ENCODE measurements at regions of chr5 and their contacts with region 1.

Region 1: DNA sequence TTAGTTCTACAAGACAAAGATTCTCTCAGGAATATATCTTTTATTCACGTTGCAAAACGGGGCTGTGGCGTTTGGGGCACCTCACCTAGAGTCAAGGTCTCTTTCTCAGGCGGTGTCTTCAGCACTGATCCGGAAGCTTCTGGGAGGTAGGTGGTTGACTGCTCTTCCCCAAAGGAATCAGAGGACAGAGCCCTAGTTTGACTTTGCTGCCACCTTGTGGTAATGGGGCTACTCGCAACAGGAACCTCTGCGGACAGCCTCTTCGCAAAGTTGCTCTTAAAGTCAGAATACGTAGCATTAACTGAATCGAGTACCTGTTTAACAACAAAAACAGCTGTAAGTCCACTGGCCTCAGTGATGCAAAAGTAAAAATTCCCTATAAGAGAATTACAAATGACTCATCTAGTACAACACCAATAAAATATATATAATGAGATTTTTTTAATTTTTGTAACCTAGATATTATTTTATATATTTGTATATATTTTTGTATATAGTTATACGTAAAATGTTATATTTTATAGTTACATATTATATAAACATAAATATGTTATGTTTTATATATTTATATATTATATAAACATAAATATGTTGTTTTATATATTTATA is 13.3 kb upstream of the GPX8 start:
- DNase-seq: peak; percentile 47 to 84 (median 77)
- ATAC-seq: peak; percentile 91
- H3K4me3 ChIP-seq: no peak overlapping the region
- H3K4me3 Mint-ChIP-seq: peak overlapping the region in 7 of 10 donors; percentile 21 to 74 (median 42)
- H3K27ac ChIP-seq: no peak overlapping the region
- H3K27ac Mint-ChIP-seq: peak overlapping the region in 6 of 9 donors; percentile 1 to 60 (median 27)
- H3K4me1 ChIP-seq: peaks cover 5 to 14% of the 10 kb centered on the region in 2 donors
- H3K4me1 Mint-ChIP-seq: peaks cover 12 to 38% (median 20%) of the 10 kb centered on the region in 7 donors
- H3K27me3 ChIP-seq: no peaks in the 10 kb centered on the region
- H3K27me3 Mint-ChIP-seq: peaks cover 0 to 62% (median 0%) of the 10 kb centered on the region in 5 donors

Region 2: DNA sequence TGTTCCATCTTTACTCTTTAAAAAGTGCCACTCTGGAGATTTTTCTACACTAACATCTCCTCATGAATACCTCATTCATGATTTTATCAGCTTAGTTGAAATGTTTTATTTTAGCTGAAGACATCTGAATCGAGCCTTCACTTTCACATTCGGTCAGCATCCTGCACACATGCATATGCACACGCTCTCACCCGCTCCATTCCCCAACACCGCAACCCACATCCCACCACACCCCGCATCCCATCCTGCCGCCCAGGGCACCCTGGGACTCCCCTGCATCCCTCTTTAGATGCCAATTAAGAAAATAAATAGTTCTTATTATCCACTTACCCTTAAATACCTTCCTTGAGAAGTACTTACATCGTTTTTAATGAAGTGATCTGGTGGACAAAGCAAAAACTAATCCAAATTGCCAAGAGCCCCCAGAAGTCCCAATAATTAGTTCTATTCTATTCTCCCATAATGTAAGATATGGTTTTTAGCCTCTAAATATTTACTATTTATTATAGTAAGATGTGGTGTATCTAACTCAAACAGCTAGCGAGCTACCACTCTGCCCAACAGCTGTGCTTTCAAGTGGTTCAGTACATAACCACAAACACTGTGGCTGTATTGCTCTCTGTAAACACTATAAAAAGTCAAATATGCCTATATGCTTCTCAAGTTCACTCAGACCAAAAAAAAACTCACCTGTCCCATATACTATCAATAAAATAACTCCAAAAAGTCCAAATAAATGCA is 84.4 kb before region 1 on chr5:
- CTCF ChIA-PET with region 1: no interaction called
- POLR2A ChIA-PET with region 1: no interaction called
- intact Hi-C with region 1: loop called in 1 of 2 experiments (anchors 1 kb)
- DNase-seq: peak in 7 of 9 donors; percentile 25 to 71 (median 46)
- ATAC-seq: peak; percentile 81
- H3K4me3 ChIP-seq: peak overlapping the region; percentile 33
- H3K4me3 Mint-ChIP-seq: peak overlapping the region; percentile 43 to 94 (median 82)
- H3K27ac ChIP-seq: no peak overlapping the region
- H3K27ac Mint-ChIP-seq: peak overlapping the region; percentile 17 to 98 (median 62)
- H3K4me1 ChIP-seq: peaks cover 26 to 30% of the 10 kb centered on the region in 2 donors
- H3K4me1 Mint-ChIP-seq: peaks cover 28 to 80% (median 67%) of the 10 kb centered on the region in 7 donors
- H3K27me3 ChIP-seq: no peaks in the 10 kb centered on the region
- H3K27me3 Mint-ChIP-seq: peaks cover 0 to 7% (median 0%) of the 10 kb centered on the region in 5 donors

Region 3: DNA sequence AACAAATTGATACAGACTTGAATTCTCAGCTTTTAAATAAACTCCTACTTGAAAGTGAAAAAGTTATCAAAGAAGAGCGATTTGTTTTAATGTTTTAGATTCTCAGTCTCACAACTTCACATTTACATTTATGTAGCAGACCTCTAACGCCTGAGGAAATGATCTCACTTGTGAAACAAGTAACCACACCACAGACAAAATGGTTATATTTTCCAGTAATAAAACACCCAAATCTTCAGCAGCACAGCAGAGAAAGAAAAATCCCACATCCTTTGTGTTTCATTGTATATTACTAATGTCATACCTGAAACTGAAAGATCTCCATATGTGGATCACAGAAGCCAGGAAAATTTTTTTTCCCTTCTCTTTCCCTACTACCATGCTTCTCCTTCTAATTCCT is 74.0 kb before region 1 on chr5:
- CTCF ChIA-PET with region 1: no interaction called
- POLR2A ChIA-PET with region 1: no interaction called
- intact Hi-C with region 1: loop called (anchors 1 to 2 kb)
- DNase-seq: peak in 7 of 9 donors; percentile 48 to 81 (median 70)
- ATAC-seq: peak; percentile 90
- H3K4me3 ChIP-seq: peak overlapping the region; percentile 28
- H3K4me3 Mint-ChIP-seq: peak overlapping the region; percentile 22 to 77 (median 60)
- H3K27ac ChIP-seq: peak overlapping the region; percentile 40
- H3K27ac Mint-ChIP-seq: peak overlapping the region; percentile 47 to 95 (median 69)
- H3K4me1 ChIP-seq: peaks cover 27 to 35% of the 10 kb centered on the region in 2 donors
- H3K4me1 Mint-ChIP-seq: peaks cover 15 to 54% (median 43%) of the 10 kb centered on the region in 7 donors
- H3K27me3 ChIP-seq: no peaks in the 10 kb centered on the region
- H3K27me3 Mint-ChIP-seq: no peaks in the 10 kb centered on the region

Region 4: DNA sequence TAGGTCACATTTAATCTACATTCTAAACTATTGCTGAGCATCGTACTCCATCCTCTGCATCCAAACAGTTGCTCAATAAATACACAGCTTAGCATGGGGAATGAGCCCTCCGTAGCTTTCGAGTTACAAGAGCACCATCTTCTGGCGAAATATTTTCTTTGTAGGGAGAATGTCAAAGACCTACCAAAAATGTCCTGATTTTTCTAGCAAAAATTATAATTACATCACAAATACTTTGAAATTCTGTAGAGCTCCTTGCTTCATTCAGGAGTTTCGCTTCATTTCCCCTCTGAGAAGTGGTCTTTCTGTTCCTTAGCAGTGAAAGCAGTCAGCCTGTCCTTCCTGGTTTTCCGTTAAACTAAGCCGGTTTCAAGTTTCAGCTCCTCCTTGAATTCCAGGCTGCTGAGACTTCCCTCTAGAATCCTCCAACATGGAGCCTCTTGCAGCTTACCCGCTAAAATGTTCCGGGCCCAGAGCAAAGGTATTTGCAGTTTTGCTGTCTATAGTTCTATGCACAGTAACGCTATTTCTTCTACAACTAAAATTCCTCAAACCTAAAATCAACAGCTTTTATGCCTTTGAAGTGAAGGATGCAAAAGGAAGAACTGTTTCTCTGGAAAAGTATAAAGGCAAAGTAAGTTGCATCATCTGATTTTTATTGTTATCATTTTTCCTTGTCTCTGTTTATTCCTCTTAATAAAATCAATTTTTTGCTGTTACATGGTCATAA is 13.3 kb after region 1 on chr5 and contains the start of gene GPX8:
- CTCF ChIA-PET with region 1: interaction called, 18 read pairs
- POLR2A ChIA-PET with region 1: no interaction called
- intact Hi-C with region 1: loop called in 1 of 2 experiments (anchors 1 kb)
- DNase-seq: peak in 7 of 9 donors; percentile 27 to 65 (median 54)
- ATAC-seq: peak; percentile 75
- H3K4me3 ChIP-seq: no peak within 1 kb of the TSS
- H3K4me3 Mint-ChIP-seq: no peak within 1 kb of the TSS
- H3K27ac ChIP-seq: no peak within 1 kb of the TSS
- H3K27ac Mint-ChIP-seq: no peak within 1 kb of the TSS
- H3K4me1 ChIP-seq: no peaks in the 10 kb centered on the region
- H3K4me1 Mint-ChIP-seq: peaks cover 0 to 9% (median 0%) of the 10 kb centered on the region in 7 donors
- H3K27me3 ChIP-seq: no peaks in the 10 kb centered on the region
- H3K27me3 Mint-ChIP-seq: peaks cover 6 to 75% (median 29%) of the 10 kb centered on the region in 5 donors
- total RNA-seq, gene GPX8: not detected

Region 5: DNA sequence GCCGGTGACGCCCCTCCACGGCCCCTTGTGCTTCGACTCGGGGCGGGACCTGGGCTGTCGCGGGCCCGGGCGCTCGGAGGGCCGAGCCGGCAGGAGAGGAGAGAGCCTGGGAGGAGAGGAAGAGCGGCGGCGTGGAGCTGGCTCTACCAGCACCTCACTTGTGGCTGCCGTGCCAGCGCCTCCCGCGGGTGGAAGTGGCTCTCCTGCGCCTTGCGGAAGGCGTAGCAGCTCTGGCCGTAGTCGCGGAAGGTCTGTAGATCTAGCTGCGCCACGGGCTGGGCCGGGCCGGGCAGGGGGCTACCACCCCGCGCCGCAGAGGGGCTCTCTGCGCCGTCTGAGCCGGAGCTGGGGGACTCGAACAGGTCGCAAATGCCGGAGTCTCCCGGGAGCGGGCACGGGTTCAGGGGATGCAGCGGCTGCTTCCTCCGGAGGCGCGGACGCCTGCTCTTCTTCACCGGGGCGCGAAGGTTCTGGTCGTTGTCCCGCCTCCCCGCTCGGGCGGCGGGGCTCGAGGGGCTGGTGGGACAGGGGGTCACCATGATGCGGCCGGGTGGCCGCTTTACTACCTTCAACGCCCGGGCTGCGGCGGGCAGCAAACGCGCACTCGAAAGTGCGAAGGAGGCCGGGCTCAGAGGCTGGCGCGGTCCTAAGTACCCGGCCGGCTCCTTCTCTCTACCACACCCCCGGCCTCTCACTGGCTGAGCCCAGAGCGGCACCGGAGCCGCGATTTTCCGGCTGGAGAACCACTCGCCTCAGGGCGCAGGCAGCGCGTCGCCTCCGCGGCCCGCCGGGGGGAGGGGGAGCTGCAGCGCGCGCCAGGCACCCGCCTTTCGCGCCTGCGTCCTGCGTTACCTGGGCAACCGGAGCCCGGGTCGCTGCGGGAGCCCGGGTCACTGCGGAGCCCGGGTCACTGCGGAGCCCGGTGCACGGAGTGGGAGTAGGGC is 86.6 kb after region 1 on chr5 and contains the start of gene CCNO:
- CTCF ChIA-PET with region 1: no interaction called
- POLR2A ChIA-PET with region 1: no interaction called
- intact Hi-C with region 1: no loop called
- DNase-seq: peak in 8 of 9 donors; percentile 30 to 76 (median 50)
- ATAC-seq: peak; percentile 78
- H3K4me3 ChIP-seq: peak within 1 kb of the TSS; percentile 59
- H3K4me3 Mint-ChIP-seq: peak within 1 kb of the TSS; percentile 81 to 94 (median 86)
- H3K27ac ChIP-seq: no peak within 1 kb of the TSS
- H3K27ac Mint-ChIP-seq: peak within 1 kb of the TSS in 3 of 9 donors; percentile 25 to 41 (median 38)
- H3K4me1 ChIP-seq: peaks cover 22 to 27% of the 10 kb centered on the region in 2 donors
- H3K4me1 Mint-ChIP-seq: peaks cover 19 to 46% (median 29%) of the 10 kb centered on the region in 7 donors
- H3K27me3 ChIP-seq: peaks cover 9 to 35% of the 10 kb centered on the region in 2 donors
- H3K27me3 Mint-ChIP-seq: peaks cover 69 to 87% (median 76%) of the 10 kb centered on the region in 5 donors
- total RNA-seq, gene CCNO: not detected

Measured in naive thymus-derived CD4-positive, alpha-beta T cell (primary cell).